H1 (cell line): ENCODE measurements at regions of chr1 and their contacts with region 1.

Region 1: DNA sequence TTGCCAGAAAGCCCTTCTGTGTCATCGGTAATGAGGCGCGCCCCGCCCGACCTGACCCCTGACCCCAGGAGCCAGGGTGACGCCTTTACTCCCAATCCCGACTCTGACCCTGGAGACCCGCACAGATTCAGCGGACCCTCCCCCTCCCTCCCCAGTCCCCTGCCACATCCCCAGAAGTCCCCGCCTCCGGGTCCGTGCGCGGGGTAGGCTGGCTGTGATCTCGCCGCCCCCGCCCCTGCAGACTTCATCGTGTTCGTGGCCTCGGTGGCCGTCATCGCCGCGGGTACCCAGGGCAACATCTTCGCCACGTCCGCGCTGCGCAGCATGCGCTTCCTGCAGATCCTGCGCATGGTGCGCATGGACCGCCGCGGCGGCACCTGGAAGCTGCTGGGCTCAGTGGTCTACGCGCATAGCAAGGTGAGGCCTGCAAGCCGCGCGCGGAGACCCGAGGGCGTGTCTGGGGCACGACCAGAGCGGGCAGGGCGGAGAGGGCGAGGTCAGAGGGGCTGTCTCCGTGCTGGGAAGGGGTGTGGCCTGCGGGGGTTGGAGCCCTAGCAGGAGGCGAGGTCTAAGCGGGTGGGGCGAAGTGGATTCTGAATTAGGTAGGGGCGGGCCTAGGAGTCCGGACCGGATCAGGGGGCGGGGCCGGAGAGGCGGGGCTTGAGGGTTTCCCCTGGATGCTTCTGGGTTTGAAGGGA is 34.8 kb downstream of the KCNQ4 start:
- DNase-seq: peak; percentile 60 to 97
- H3K4me3 ChIP-seq: peak overlapping the region; percentile 58 to 76 (median 64)
- H3K27ac ChIP-seq: no peak overlapping the region
- H3K4me1 ChIP-seq: peaks cover 0 to 6% (median 4%) of the 10 kb centered on the region in 4 experiments; a peak in 4 of 7 replicates
- H3K27me3 ChIP-seq: peaks cover 0 to 5% (median 2%) of the 10 kb centered on the region in 4 experiments; a peak in 3 of 7 replicates
- CTCF ChIP-seq: no peak
- EP300 ChIP-seq: no peak
- POLR2A ChIP-seq: no peak
- RAD21 ChIP-seq: no peak

Region 2: DNA sequence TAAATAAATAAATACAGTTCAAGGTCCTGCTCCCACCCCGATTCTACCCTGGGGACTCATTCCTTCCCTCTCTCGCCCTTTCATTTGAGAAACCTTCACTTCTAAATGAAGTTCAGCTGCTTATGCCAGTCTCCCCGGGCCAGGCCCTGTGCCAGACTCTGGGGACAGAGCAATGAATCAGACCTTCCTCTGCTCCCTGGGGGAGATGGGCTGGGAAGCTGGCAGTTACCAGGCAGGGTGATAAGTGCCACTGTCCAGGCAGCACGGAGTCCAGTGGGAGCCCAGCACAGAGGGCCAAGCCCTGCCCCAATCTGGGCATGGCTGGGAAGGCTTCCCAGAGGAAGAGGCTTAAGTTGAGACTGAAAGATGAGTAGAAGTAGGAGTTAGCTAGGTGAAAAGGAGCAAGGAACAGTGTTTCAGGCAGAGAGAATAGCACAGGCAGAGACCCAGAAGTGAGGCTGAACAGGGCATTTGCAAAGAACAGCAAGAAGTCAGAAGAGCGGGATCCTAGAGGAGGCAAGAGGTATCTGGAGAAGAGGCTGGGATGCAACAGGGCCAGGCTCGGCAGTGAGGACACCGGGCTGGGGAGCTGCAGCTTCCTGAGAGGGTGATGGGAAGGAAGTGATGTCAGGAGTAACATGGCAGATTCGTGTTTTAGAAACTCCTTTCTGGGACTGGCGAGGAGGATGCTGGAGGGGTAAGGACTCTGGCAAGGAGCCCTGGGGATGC is 21.3 kb before region 1 on chr1:
- CTCF ChIA-PET with region 1: interaction called, 15 read pairs
- POLR2A ChIA-PET with region 1: interaction called, 3 read pairs
- DNase-seq: no peak
- H3K4me3 ChIP-seq: no peak overlapping the region
- H3K27ac ChIP-seq: no peak overlapping the region
- H3K4me1 ChIP-seq: peaks cover 4 to 16% (median 12%) of the 10 kb centered on the region in 4 experiments
- H3K27me3 ChIP-seq: peaks cover 0 to 6% (median 4%) of the 10 kb centered on the region in 4 experiments; a peak in 3 of 7 replicates
- CTCF ChIP-seq: no peak
- EP300 ChIP-seq: no peak
- POLR2A ChIP-seq: no peak
- RAD21 ChIP-seq: no peak

Region 3: DNA sequence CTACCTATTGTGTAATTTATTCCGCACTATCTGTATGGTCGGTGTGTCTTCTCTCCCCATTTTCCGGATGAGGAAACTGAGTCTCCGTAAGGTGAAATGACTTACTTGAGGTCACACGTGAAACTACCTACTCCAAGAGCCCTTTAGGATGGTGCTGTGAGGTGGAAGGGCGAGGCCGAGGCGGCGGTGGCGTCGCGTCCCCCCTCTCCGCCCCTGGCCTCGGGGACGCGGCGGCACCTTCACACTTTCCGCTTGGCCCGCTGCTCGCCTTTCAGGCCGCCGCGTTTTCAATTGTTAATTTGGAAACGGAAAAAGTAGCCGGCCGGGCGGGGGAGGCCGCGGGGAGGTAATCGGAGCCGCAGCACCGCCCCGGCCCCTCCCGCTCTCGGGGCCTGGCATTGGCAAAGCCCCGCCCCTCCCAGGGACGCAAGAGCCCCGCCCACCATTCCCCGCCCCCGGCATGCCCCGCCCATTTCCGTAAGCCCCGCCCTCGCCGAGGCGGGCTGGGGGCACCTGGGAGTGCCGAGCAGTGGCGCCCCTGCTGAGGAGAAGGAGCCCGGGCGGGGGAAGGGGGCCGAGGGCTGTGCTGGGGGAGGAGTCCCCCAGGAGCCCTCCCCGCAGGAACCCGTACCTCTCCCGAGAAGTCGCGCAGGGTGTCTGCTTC is 16.2 kb before region 1 on chr1:
- CTCF ChIA-PET with region 1: interaction called, 19 read pairs
- POLR2A ChIA-PET with region 1: interaction called, 6 read pairs
- DNase-seq: peak; percentile 80 to 92
- H3K4me3 ChIP-seq: peak overlapping the region; percentile 17 to 51 (median 28); a peak in 6 of 8 replicates
- H3K27ac ChIP-seq: no peak overlapping the region
- H3K4me1 ChIP-seq: peaks cover 9 to 33% (median 25%) of the 10 kb centered on the region in 4 experiments
- H3K27me3 ChIP-seq: peaks cover 0 to 6% (median 4%) of the 10 kb centered on the region in 4 experiments; a peak in 3 of 7 replicates
- CTCF ChIP-seq: no peak
- EP300 ChIP-seq: no peak
- POLR2A ChIP-seq: no peak
- RAD21 ChIP-seq: no peak

Region 4: DNA sequence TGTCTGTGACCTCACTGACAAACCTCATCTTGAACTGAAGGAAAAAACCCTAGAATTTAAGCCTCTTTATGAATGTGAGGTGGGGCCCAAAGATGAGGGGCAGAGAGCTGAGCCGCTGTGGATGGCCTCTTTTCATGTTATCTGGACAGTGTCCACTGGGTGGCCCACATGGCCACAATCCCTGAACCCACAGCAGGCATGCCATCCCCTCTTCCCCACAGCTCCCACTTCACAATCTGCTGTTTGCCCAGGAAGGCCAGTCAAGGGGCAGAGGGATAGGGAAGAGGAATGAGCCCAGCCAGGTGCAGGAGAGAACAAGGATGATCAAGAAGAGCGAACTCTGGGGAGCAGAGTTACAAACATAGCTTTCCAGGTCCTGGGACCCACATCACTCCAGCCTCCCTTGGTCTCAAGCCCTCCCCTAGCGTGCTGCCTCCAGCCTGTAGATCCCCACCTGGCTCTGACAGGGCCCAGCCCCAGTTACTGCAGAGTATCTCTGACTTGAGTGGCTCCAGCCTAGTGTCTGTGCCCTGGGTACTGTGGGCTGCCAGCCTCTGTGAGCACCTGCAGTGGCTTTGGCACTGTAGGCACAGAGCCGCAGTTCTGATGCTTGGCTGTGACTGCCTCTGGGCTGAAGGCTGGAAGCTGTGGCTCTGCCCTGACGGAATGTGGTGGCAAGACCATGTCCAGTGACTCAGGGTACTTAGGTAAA is 205.0 kb after region 1 on chr1:
- CTCF ChIA-PET with region 1: no interaction called
- POLR2A ChIA-PET with region 1: no interaction called
- DNase-seq: no peak
- H3K4me3 ChIP-seq: no peak overlapping the region
- H3K27ac ChIP-seq: no peak overlapping the region
- H3K4me1 ChIP-seq: peaks cover 0 to 7% (median 4%) of the 10 kb centered on the region in 4 experiments; a peak in 4 of 7 replicates
- H3K27me3 ChIP-seq: peaks cover 0 to 13% (median 6%) of the 10 kb centered on the region in 4 experiments; a peak in 5 of 7 replicates
- CTCF ChIP-seq: peak; percentile 19 to 46 (median 43); a peak in 3 of 4 replicates
- EP300 ChIP-seq: no peak
- POLR2A ChIP-seq: no peak
- RAD21 ChIP-seq: peak; percentile 21 to 40; a peak in 3 of 4 replicates